Left lung (tissue), 14 donors: ENCODE measurements at regions of chr14 and their contacts with region 1.

Region 1: DNA sequence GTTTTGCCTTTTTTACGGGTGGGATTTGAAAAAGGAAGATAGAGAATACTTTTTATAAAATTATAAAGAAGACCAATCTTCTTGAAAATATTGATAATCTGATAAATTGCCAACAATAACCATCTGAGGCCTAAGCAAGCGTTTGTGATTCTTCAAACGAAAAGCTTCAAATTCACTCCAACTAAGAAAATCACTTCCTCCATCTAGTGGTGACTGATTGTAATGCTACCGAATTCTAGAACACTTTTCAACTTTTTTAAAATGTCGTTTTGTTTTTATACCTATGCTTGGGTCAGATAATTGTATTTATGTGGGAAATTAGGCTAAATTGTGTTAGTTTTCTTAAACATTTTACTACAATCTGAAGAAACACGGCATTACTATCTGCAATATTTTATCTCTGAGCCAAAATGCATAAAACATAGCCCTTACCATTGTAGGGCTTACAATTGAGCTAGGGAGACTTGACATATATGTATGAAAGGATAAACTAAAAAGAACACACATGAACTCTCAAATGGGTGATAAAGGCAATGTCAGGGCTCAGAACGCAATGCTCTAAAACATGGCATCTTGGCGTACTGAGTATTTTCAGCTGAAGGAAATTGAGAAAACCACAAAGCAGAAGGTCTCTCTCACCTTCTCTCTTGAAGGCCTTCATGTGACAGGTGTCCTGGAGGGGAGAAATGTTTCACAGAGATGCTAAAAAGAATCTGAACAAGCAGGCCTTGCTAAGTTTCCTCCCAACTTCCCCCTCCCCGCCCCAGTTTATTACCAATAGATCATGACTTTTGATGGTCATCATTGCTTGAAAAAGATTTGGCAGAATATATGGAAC is 36.8 kb upstream of the G2E3 start:
- DNase-seq: peak in 2 of 4 donors; percentile 6 to 15
- ATAC-seq: peak; percentile 57
- H3K4me3 ChIP-seq: no peak overlapping the region
- H3K27ac ChIP-seq: no peak overlapping the region
- H3K4me1 ChIP-seq: no peaks in the 10 kb centered on the region
- H3K27me3 ChIP-seq: no peaks in the 10 kb centered on the region
- CTCF ChIP-seq: peak; percentile 61

Region 2: GRCh38 chr14:30297876-30298795 is 224.0 kb before region 1 on chr14:
- intact Hi-C with region 1: no loop called
- DNase-seq: peak in 1 of 4 donors; percentile 10
- ATAC-seq: peak; percentile 62
- H3K4me3 ChIP-seq: no peak overlapping the region
- H3K27ac ChIP-seq: no peak overlapping the region
- H3K4me1 ChIP-seq: no peaks in the 10 kb centered on the region
- H3K27me3 ChIP-seq: no peaks in the 10 kb centered on the region
- CTCF ChIP-seq: no peak

Region 3: GRCh38 chr14:30375296-30375892 is 146.7 kb before region 1 on chr14:
- intact Hi-C with region 1: loop called in 1 of 2 experiments (anchors 10 kb)
- DNase-seq: peak in 2 of 4 donors; percentile 19 to 34
- ATAC-seq: peak; percentile 94
- H3K4me3 ChIP-seq: no peak overlapping the region
- H3K27ac ChIP-seq: no peak overlapping the region
- H3K4me1 ChIP-seq: no peaks in the 10 kb centered on the region
- H3K27me3 ChIP-seq: no peaks in the 10 kb centered on the region
- CTCF ChIP-seq: peak; percentile 63 to 64

Region 4: DNA sequence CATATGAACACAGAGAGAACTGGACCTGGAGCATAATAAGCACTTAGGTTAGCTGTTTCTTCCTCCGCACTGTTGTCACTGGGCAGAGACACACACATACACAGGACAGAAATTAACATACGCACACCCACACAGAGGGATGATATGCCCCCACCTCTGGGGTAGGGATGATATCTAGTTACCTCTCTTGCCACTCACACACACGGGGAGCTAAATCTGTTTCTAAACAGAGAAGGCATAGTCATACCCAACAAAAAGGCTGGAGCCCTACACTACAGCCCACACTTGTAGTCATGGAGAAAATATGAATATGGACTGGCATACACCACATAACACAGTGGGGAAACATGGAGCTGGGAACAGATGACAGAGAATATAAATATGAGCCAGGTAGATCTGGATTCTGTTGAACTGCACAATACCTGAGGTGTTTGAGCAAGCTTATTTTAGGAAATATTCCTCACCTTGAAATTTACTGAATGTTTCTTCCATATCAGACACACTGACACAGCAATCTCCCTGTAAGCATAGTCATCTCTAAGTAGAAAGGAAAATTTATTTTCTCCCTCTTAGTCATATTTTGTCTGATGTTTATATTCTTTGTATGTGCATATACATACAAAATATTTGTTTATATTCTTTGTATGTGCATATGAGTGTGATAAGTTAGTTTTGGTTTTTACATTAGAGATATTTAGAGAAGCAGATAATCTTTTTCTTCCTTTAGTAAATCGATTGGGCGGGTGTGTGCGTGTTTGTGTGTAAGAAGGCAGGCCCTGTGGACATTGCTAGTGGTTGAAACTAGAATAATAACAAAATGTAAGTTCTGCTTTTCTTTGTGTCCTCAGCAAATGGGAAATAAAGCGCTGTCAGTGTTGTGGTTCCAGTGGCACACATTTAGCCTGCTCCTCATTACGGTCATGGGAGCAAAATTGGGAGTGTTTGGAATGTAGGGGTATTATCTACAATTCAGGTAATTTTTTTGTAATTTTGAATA is 79.1 kb after region 1 on chr14:
- intact Hi-C with region 1: no loop called
- DNase-seq: no peak
- ATAC-seq: no peak
- H3K4me3 ChIP-seq: no peak overlapping the region
- H3K27ac ChIP-seq: no peak overlapping the region
- H3K4me1 ChIP-seq: no peaks in the 10 kb centered on the region
- H3K27me3 ChIP-seq: no peaks in the 10 kb centered on the region
- CTCF ChIP-seq: no peak